OCI-LY7 (cell line): ENCODE measurements at regions of chr20 and their contacts with region 1.

Region 1: DNA sequence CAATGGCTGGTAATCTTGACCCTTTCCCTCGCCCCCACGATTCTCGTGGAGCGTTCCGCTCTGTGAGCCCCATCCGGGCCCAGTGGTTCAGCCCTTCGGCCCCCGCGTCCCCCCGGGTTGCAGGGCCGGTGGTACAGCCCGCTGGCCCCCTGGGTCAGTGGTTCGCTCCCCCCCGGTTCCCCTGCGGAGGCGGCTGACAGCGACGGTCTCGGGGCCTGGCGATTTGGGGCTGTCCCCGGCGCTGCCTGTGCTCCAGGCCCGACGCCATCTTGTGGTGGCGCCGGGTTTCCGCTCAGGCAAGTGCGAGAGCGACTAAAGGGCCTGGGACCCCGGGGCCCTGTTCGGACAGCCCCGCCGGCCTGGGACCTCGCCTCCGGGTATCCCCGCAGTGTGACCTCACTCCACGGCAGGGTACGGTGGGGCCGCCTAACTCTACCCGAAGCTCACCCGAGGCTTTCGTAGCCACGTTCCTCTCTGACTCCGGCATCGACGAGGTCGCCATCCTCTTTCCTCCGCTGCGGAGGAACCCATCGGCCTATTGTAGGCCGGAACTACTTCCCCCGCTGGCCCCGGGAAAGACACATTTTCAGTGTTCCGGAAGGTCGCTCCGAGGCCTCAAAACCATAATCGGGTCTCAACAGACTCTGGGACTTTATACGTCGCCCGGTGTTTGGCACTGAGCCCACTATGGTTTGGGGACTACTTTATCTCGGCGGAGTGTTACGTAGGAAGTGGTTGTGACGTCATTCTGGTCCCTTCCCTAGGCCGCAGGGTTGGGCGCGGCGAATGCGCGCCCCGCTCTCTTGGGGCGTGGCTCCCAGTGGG is at the start of gene ZNF335:
- DNase-seq: peak; percentile 98
- H3K4me3 ChIP-seq: peak within 1 kb of the TSS; percentile 94
- H3K27ac ChIP-seq: peak within 1 kb of the TSS; percentile 94
- H3K4me1 ChIP-seq: peaks cover 25% of the 10 kb centered on the region
- CTCF ChIP-seq: no peak
- total RNA-seq, gene ZNF335: 15.0 and 21.0 TPM in 2 replicates

Region 2: GRCh38 chr20:45368221-45368980 is 603.5 kb before region 1 on chr20:
- CTCF ChIA-PET with region 1: no interaction called
- POLR2A ChIA-PET with region 1: no interaction called
- intact Hi-C with region 1: loop called (anchors 5 kb)
- DNase-seq: peak; percentile 97
- H3K4me3 ChIP-seq: peak overlapping the region; percentile 50
- H3K27ac ChIP-seq: peak overlapping the region; percentile 83
- H3K4me1 ChIP-seq: peaks cover 74% of the 10 kb centered on the region
- CTCF ChIP-seq: no peak

Region 3: DNA sequence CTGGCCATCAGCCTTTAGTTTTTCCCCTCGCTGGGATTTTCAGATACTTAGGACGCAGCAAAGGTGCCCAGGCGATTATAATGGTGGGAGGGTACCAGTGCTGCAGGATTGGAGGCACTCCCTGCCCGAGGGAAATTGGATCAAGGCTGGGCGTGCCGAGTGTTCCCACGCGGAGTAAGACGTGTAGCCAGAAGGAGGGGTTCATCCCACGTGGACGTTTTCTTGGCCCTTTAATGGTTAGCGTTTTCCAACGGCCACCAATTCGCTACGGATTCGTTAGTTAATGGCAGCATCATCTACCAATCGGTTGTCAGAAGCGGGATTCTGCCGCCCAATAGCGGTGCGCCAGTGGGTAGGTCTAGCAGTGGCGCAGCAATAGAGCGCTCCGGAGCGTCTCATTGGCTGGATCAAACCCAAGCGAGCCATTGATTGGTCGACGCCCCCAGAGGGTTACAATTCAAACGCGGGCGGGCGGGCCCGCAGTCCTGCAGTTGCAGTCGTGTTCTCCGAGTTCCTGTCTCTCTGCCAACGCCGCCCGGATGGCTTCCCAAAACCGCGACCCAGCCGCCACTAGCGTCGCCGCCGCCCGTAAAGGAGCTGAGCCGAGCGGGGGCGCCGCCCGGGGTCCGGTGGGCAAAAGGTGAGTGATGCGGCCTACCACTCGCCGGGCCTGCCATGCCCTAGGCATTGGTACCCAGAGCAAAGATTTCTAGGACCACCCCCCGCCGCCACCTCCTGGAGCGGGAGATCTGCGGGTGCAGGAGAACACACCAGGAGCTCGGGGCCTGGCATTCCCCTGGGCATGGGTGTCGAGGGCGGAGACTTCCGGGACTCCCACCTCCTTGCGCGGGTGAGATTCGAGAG is 159.5 kb before region 1 on chr20 and contains the start of gene UBE2C:
- CTCF ChIA-PET with region 1: interaction called, 4 read pairs
- POLR2A ChIA-PET with region 1: no interaction called
- intact Hi-C with region 1: loop called (anchors 5 kb)
- DNase-seq: peak; percentile 99
- H3K4me3 ChIP-seq: peak within 1 kb of the TSS; percentile 82
- H3K27ac ChIP-seq: peak within 1 kb of the TSS; percentile 79
- H3K4me1 ChIP-seq: peaks cover 19% of the 10 kb centered on the region
- CTCF ChIP-seq: no peak
- total RNA-seq, gene UBE2C: 225 and 269 TPM in 2 replicates

Region 4: GRCh38 chr20:46022411-46023147 is 50.7 kb after region 1 on chr20:
- CTCF ChIA-PET with region 1: no interaction called
- POLR2A ChIA-PET with region 1: no interaction called
- intact Hi-C with region 1: loop called (anchors 5 kb)
- DNase-seq: peak; percentile 82
- H3K4me3 ChIP-seq: peak overlapping the region; percentile 75
- H3K27ac ChIP-seq: no peak overlapping the region
- H3K4me1 ChIP-seq: peaks cover 18% of the 10 kb centered on the region
- CTCF ChIP-seq: peak; percentile 91

Region 5: GRCh38 chr20:46406199-46406985 is 434.5 kb after region 1 on chr20 and contains the start of gene ELMO2:
- CTCF ChIA-PET with region 1: interaction called, 3 read pairs
- POLR2A ChIA-PET with region 1: interaction called, 5 read pairs
- intact Hi-C with region 1: loop called (anchors 2 kb)
- DNase-seq: peak; percentile 96
- H3K4me3 ChIP-seq: peak within 1 kb of the TSS; percentile 83
- H3K27ac ChIP-seq: no peak within 1 kb of the TSS
- H3K4me1 ChIP-seq: peaks cover 36% of the 10 kb centered on the region
- CTCF ChIP-seq: no peak
- total RNA-seq, gene ELMO2: 16.0 and 18.9 TPM in 2 replicates